Ascending aorta (tissue), 2 donors: ENCODE measurements at regions of chr17 and their contacts with region 1.

Region 1: GRCh38 chr17:38799378-38800236 is at the start of gene PIP4K2B:
- DNase-seq: peak; percentile 85 to 98
- H3K4me3 ChIP-seq: peak within 1 kb of the TSS; percentile 88 to 93
- H3K27ac ChIP-seq: peak within 1 kb of the TSS; percentile 98 to 100
- H3K4me1 ChIP-seq: peaks cover 7 to 25% of the 10 kb centered on the region in 2 donors
- H3K27me3 ChIP-seq: no peaks in the 10 kb centered on the region
- CTCF ChIP-seq: no peak
- total RNA-seq, gene PIP4K2B: 45.0 TPM

Region 2: DNA sequence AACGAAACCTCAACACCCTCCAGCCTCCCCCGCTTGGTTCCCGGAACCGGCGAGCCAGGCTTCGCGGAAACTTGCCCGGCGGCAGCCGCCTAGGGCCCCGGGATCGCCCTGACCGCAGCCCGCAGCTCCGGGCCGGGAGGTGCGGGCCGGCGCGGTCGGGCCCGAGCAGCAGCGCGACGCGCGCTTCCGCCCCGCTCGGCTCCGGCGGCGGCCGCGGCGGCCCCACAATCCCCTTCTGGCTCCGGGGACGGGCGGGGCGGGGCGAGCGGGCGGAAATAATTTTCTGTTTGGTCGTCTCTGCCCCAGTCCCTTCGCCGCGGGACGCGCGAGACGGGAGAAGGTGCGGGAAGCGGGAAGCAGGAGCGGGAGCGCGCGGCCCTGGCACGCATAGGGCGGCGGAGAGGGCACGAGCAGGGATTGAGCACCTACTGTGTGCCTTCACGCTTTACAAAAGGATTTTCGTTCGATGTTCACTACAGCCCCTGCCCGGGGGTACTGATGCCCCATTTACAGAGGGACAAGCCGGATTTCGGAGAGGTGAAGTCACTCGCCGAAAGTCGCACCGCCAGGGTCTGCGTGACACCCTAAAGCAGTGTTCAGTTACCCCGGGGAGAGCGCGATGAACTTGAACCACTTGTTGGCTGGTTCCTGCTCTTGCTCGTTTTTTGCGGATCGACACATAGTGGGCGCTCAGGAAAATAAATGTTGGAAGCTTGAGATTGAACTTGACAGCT is 97.3 kb before region 1 on chr17:
- intact Hi-C with region 1: loop called (anchors 2 kb)
- DNase-seq: peak; percentile 59 to 94
- H3K4me3 ChIP-seq: peak overlapping the region; percentile 97 to 98
- H3K27ac ChIP-seq: peak overlapping the region; percentile 93 to 98
- H3K4me1 ChIP-seq: peaks cover 4 to 17% of the 10 kb centered on the region in 2 donors
- H3K27me3 ChIP-seq: no peaks in the 10 kb centered on the region
- CTCF ChIP-seq: no peak

Region 3: GRCh38 chr17:38824899-38825761 is 25.5 kb after region 1 on chr17 and contains the start of gene CWC25:
- intact Hi-C with region 1: loop called (anchors 1 kb)
- DNase-seq: peak; percentile 84 to 98
- H3K4me3 ChIP-seq: peak within 1 kb of the TSS; percentile 81 to 82
- H3K27ac ChIP-seq: peak within 1 kb of the TSS; percentile 93 to 99
- H3K4me1 ChIP-seq: peaks cover 12 to 14% of the 10 kb centered on the region in 2 donors
- H3K27me3 ChIP-seq: no peaks in the 10 kb centered on the region
- CTCF ChIP-seq: no peak
- total RNA-seq, gene CWC25: 65.2 TPM

Region 4: DNA sequence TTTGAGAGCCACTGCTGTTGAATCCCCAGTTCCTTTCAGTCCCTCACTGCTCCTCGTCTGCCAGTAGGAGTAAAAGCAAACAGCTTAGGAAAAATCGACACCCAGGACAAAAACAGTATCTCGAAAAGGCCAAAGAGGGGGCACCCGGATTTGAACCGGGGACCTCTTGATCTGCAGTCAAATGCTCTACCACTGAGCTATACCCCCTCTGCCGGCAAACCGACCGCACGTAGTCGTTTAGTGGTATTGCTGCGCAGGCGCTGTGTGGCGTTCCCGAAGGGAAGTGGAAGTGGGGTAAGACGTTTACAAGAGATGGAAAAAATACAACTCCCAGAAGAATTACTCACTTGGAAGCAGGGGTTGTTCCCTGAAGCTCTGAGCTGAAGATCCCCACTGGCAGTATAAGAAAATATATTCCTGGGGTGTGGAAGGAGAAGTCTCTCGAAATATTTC is 354.0 kb after region 1 on chr17:
- intact Hi-C with region 1: loop called (anchors 5 kb)
- DNase-seq: peak; percentile 90 to 98
- H3K4me3 ChIP-seq: peak overlapping the region; percentile 85 to 94
- H3K27ac ChIP-seq: peak overlapping the region; percentile 84 to 94
- H3K4me1 ChIP-seq: peaks cover 12 to 15% of the 10 kb centered on the region in 2 donors
- H3K27me3 ChIP-seq: no peaks in the 10 kb centered on the region
- CTCF ChIP-seq: peak in 2 of 3 experiments; percentile 16 to 33

Region 5: GRCh38 chr17:39199820-39200069 is 400.1 kb after region 1 on chr17:
- intact Hi-C with region 1: loop called (anchors 1 kb)
- DNase-seq: peak; percentile 56 to 96
- H3K4me3 ChIP-seq: peak overlapping the region; percentile 83 to 89
- H3K27ac ChIP-seq: peak overlapping the region; percentile 92 to 98
- H3K4me1 ChIP-seq: peaks cover 28 to 46% of the 10 kb centered on the region in 2 donors
- H3K27me3 ChIP-seq: no peaks in the 10 kb centered on the region
- CTCF ChIP-seq: no peak